GM10248 (cell line): ENCODE measurements at regions of chr2 and their contacts with region 1.

Region 1: GRCh38 chr2:88857951-88858411 is 166.5 kb downstream of the RPIA start:
- DNase-seq: peak; percentile 12
- CTCF ChIP-seq: no peak

Region 2: GRCh38 chr2:88627056-88627855 is 230.7 kb before region 1 on chr2 and contains the start of gene EIF2AK3:
- CTCF ChIA-PET with region 1: no interaction called
- POLR2A ChIA-PET with region 1: no interaction called
- DNase-seq: peak; percentile 93
- CTCF ChIP-seq: no peak

Region 3: DNA sequence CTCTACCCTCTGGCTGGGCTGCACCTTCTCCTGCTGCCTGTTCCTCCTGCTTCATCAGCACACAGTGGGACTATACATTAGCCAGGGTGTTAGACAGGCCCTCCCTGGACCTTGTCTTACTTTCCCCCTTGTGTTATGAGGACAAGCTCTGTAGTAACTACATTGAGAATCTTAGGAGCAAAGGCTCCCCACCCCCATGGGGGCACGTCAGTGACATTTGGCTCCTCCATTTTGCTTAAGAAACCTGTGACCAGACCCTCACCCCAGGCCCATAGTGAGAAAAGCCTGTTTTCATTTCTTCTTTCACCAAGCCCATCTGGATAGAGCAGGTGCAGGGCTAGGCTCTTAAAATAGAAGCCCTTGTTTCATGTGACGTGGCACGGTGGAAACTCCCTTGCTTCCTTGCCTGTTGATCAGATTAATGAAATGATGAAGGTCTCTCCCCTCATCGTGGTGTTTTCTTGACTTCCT is 19.8 kb before region 1 on chr2:
- CTCF ChIA-PET with region 1: interaction called, 460 read pairs
- POLR2A ChIA-PET with region 1: interaction called, 79 read pairs
- DNase-seq: peak; percentile 21
- CTCF ChIP-seq: no peak

Region 4: DNA sequence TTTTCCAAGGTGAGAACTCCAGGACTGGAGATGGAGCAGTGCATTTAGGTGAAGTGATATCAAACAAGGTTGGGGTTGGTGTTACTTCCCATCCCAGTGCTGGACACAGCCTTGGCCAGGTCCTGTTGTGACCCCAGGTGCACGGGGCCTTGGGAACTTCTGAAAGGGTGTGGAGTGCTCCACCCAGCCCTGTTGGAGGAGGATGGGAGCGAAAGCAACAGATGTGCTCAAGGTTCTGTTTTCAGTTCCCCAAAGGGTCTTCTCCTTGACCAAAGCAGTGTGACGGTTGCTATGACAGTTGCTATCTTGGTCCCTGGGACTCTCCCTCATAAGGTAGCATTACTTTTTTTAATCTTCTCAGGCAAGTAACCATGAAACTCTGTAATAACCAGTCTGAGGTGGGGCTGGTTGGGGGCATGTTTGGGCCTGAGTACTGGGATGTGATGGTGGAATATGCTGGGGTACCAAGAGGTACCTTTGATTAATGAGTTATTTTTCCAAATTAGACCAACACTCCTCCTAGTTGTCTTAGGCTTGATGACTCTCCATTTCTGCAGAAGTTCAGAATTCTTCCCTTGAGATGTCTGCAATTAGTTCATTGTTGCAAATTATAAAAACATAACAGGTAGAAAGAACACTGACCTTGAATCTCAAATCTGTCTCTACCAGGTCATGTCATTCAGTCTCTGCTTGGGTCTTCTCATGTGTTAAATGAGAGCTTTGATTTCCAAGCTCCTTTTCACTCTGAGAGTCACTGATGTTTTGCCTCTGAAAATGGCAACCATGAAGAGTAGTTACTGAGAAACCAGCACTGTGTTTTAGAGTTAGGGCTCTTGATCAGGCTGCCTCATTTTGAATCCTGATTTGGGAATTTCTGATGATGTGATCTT is 12.0 kb before region 1 on chr2:
- CTCF ChIA-PET with region 1: interaction called, 460 read pairs
- POLR2A ChIA-PET with region 1: interaction called, 36 read pairs
- DNase-seq: peak; percentile 29
- CTCF ChIP-seq: no peak